Dorsolateral prefrontal cortex (tissue), 120 donors: ENCODE measurements at regions of chr15 and their contacts with region 1.

Region 1: GRCh38 chr15:68195336-68196112 is 9.6 kb downstream of the CALML4 start:
- DNase-seq: no peak
- H3K4me3 ChIP-seq: no peak overlapping the region
- H3K27ac ChIP-seq: peak overlapping the region in 57 of 59 donors; percentile 13 to 90 (median 77)
- H3K27me3 ChIP-seq: no peaks in the 10 kb centered on the region
- CTCF ChIP-seq: peak in 2 of 56 donors; percentile 3 to 10

Region 2: DNA sequence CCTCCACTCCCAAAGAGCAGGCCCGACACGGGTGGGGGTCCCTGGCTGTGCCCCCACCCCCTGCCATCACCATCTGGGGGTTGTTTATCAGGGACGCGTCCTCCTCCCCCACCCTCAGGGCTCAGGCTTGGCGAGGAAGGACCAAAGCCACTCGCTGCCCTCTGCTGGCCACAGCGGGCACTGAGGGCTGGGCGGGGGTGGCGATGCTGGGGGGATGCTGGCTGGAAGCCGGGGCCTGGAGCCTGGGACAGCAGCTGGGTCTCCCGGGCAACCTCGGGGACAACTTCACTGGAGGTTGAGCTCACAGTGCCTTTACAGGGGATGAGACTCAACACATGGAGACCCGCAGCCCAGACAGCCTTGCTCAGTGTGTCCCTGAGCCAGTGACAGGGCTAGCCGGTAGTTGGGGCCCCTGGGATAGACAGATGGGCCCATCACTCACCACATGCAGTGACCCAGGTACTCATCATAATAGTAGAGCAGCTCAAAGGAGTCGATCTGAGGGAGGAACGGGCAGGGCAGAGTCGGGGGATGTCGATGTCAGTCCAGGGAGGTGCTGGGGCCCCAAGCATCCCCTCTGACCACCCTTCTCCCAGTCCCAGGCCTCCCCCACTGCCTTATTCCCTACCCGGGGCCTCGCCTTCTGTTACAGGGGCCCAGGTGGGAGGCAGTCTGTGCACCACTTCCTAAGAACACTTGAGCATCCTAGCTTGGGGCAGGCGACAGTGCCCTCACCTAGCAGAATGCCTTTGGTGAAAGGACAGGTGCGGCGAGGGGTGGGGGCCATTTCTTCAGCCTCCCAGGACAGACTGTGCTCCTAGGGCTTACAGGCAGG is 15.5 kb after region 1 on chr15:
- intact Hi-C with region 1: loop called in 1 of 2 experiments (anchors 2 kb)
- DNase-seq: peak; percentile 79 to 92 (median 81)
- H3K4me3 ChIP-seq: peak overlapping the region in 57 of 59 donors; percentile 10 to 68 (median 49)
- H3K27ac ChIP-seq: peak overlapping the region in 54 of 59 donors; percentile 36 to 93 (median 73)
- H3K27me3 ChIP-seq: no peaks in the 10 kb centered on the region
- CTCF ChIP-seq: peak; percentile 54 to 98 (median 92)

Region 3: DNA sequence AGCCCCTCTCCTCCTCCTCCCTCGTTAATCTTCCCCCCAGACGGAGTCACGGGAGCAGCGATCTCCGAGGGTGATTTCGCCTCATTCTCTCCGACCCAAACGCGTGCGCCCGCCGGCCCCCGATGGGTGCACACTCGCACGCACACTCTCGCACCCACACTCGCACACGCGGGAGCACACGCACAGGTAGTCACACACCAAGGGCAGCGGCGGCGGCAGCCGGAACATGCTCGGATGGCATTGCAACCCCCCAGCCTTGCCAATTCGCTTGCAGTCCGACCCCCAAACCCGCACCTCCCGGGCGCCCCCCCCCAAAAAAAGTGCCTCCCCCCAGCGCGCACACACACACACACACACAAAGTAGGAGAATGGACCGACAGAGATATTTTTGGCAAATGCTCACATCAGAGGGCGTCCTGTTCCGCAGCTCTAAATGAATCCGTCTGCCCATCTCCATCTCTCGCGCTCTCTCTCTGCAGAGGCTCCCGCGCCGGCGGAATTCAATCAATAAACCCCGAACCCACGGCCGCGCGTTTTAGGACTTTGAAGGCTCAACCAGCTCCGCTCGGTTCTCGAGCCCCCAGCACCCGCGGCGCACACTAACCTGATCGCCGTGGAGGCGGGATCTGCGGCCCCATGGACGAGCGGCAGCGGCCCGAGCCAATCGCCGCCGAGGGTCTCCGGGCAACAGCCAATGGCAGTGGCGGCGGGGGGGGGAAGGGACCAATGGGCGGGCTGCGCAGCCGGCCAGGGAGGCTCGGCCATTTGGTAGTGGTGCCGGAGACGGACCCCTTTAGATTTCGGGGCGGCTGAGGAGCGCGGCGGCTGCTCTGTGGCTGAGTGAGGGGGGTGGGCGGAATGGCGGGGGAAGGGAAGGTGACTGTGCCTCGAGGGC is 625.0 kb after region 1 on chr15 and contains the start of gene ANP32A:
- intact Hi-C with region 1: no loop called
- DNase-seq: peak; percentile 91 to 97 (median 96)
- H3K4me3 ChIP-seq: peak within 1 kb of the TSS; percentile 68 to 99 (median 91)
- H3K27ac ChIP-seq: peak within 1 kb of the TSS; percentile 95 to 100 (median 99)
- H3K27me3 ChIP-seq: no peaks in the 10 kb centered on the region
- CTCF ChIP-seq: no peak
- total RNA-seq, gene ANP32A: 83.9 to 167 (median 121) TPM